IMR-90 (cell line): ENCODE measurements at regions of chr13 and their contacts with region 1.

Region 1: GRCh38 chr13:63044589-63045313 is 1629.1 kb upstream of the PCDH20 start:
- DNase-seq: peak; percentile 39
- ATAC-seq: 0 out of 2 replicates have a peak, but pooled peaks have one; percentile 9
- H3K4me3 ChIP-seq: no peak overlapping the region
- H3K27ac ChIP-seq: no peak overlapping the region
- H3K4me1 ChIP-seq: peaks cover 6% of the 10 kb centered on the region
- H3K27me3 ChIP-seq: no peaks in the 10 kb centered on the region
- CTCF ChIP-seq: no peak
- POLR2A ChIP-seq: no peak
- RAD21 ChIP-seq: no peak

Region 2: DNA sequence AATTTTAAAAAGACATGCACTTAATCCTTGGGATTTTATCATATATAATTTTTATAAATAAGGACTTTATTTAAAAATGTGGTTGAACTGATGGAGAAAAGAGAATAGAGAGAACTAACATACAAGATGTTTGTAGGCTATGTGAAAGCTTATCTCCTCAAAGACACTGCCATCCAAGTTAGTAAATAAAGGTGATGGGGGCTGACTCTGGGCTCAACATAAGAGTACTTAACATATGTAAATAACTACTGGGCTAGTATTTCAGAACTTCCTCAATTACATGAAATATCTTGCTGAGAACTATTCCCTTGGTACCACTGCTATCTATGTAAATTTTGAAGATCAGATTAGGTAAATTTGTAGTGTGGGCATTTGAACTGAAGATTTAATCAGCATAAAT is 611.8 kb before region 1 on chr13:
- CTCF ChIA-PET with region 1: no interaction called
- POLR2A ChIA-PET with region 1: no interaction called
- dilution Hi-C with region 1: no loop called
- in situ Hi-C with region 1: no loop called
- intact Hi-C with region 1: no loop called
- DNase-seq: no peak
- ATAC-seq: no peak
- H3K4me3 ChIP-seq: no peak overlapping the region
- H3K27ac ChIP-seq: no peak overlapping the region
- H3K4me1 ChIP-seq: no peaks in the 10 kb centered on the region
- H3K27me3 ChIP-seq: no peaks in the 10 kb centered on the region
- CTCF ChIP-seq: no peak
- POLR2A ChIP-seq: no peak
- RAD21 ChIP-seq: no peak

Region 3: DNA sequence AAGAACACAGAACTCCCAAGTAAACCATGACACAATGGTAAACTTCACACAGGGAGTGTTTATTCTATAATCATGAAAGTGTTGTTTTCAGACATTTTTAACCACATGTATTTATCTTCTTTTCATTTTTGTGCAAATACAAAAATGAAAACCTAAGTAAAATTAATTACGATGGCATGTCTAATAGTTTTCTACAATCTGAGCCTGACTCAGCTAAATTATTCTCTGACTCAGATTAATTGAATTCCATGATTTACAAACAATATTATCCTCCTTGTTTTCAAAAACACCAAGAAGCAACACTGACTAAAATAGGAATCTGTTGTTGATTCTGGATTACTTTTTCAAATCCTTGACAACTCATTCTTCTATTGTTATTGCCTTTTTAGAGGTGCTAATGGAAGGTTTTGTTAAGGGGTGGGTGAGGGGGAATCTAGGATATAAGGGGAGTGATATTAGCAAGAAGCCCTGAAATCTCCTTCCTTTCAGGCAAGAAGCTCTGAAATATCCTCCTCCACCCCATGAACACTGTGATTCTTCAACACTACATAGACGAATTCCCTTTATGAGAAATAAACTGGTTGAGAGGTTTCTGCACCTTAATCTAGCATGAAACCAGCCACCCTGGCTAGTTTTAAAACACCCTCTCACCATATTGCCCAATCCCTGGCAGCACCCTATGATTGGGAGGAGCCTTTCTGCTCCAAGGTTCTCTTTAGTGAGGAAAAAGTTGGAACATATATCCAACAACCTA is 571.4 kb before region 1 on chr13:
- CTCF ChIA-PET with region 1: no interaction called
- POLR2A ChIA-PET with region 1: no interaction called
- dilution Hi-C with region 1: no loop called
- in situ Hi-C with region 1: no loop called
- intact Hi-C with region 1: loop called (anchors 5 kb)
- DNase-seq: no peak
- ATAC-seq: no peak
- H3K4me3 ChIP-seq: no peak overlapping the region
- H3K27ac ChIP-seq: no peak overlapping the region
- H3K4me1 ChIP-seq: no peaks in the 10 kb centered on the region
- H3K27me3 ChIP-seq: no peaks in the 10 kb centered on the region
- CTCF ChIP-seq: no peak
- POLR2A ChIP-seq: no peak
- RAD21 ChIP-seq: no peak

Region 4: GRCh38 chr13:62973804-62974203 is 70.9 kb before region 1 on chr13:
- CTCF ChIA-PET with region 1: no interaction called
- POLR2A ChIA-PET with region 1: no interaction called
- dilution Hi-C with region 1: no loop called
- in situ Hi-C with region 1: no loop called
- intact Hi-C with region 1: no loop called
- DNase-seq: no peak
- ATAC-seq: no peak
- H3K4me3 ChIP-seq: no peak overlapping the region
- H3K27ac ChIP-seq: no peak overlapping the region
- H3K4me1 ChIP-seq: no peaks in the 10 kb centered on the region
- H3K27me3 ChIP-seq: no peaks in the 10 kb centered on the region
- CTCF ChIP-seq: no peak
- POLR2A ChIP-seq: no peak
- RAD21 ChIP-seq: no peak